ENCODE measurements at regions of chr5 and their contacts with region 1.

Region 1: DNA sequence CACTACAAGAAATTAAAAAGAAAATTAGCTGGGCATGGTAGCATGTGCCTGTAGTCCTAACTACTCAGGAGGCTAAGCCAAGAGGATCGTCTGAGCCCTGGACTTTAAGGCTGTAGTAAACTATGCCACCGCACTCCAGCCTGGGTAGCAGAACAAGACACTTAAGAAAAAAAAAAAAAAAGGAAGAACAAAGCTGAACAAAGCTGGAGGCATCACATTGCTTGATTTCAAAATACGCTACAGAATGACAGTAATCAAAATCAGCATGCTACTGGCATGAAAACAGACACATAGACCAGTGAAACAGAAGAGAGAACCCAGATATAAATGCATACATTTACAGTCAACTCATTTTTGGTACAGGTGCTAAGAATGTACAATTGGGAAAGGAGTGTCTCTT is 14.5 kb upstream of the OTULIN start:
- DNase-seq: no peak
- ATAC-seq: no peak
- H3K4me3 ChIP-seq: no peak overlapping the region
- H3K27ac ChIP-seq: no peak overlapping the region
- H3K4me1 ChIP-seq: no peaks in the 10 kb centered on the region
- H3K27me3 ChIP-seq: no peaks in the 10 kb centered on the region

Region 2: DNA sequence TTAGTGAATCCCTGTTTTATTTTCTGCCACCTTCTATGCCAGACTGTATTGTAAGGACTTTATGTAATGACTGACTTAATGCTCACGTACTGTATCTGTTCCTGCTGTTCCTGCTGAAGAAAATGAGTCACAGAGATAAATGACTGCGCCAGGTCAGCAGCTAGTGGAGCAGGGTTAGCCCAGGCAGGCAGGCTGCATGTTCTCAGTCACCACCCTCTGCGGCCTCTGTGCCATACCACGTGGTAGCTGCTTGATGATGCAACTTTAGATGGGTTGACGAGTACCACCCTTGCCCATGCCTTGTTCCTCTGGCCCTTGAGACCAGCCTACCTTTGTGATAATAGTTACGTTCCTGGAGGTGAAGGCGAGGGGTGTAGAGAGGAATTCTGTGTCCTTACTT is 345.0 kb before region 1 on chr5:
- intact Hi-C with region 1: loop called in 1 of 4 experiments (anchors 5 kb)
- DNase-seq: no peak
- ATAC-seq: peak; percentile 43 to 56
- H3K4me3 ChIP-seq: no peak overlapping the region
- H3K27ac ChIP-seq: no peak overlapping the region
- H3K4me1 ChIP-seq: peaks cover 3% of the 10 kb centered on the region
- H3K27me3 ChIP-seq: no peaks in the 10 kb centered on the region